Posterior vena cava (tissue), 2 donors: ENCODE measurements at regions of chr7 and their contacts with region 1.

Region 1: GRCh38 chr7:67387851-67388250 is 391.2 kb downstream of the TYW1 start:
- DNase-seq: no peak

Region 2: GRCh38 chr7:68348401-68348800 is 960.5 kb after region 1 on chr7:
- intact Hi-C with region 1: loop called in 1 of 2 experiments (anchors 10 kb)
- DNase-seq: no peak